ENCODE measurements at regions of chr2 and their contacts with region 1.

Region 1: DNA sequence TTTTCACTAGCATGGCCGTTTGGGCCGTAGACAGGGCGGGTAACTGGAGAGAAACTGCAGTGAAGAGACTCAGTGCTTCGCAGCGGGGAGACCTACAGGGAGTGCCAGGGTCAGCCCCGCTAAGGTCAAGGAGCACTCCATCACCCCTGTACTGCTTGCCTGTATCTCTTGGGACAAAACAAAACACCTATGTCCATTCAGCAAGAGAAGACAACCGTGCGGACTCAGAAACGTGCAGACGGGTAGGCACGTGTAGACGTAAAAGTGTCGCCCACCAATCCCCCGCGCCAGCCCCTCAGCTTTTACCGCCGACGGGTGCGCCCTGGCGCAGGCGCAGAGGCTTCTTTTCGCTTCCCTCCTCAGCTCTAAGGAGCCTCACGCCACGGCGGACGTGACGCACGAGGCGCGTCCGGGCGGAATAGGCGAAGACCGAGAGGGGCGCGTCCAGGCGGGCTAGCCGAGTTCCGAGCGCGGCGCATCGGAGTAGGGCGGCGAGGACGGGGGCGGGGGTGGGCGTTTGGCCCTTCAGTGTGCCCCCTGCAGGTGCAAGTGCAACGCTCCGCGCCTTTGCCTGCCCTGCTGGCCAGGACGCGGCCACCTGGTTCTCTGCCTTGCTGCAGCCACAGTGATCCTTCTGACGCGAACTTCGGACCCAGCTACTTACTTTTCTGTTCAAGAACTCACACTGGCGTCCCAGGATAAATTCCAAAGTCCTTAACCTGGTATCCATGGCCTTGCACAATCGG is 3.3 kb upstream of the SOS1 start:
- DNase-seq: peak; percentile 94
- H3K4me3 Mint-ChIP-seq: peak overlapping the region; percentile 99
- H3K27ac Mint-ChIP-seq: peak overlapping the region; percentile 100
- H3K4me1 Mint-ChIP-seq: peaks cover 67% of the 10 kb centered on the region
- H3K27me3 Mint-ChIP-seq: no peaks in the 10 kb centered on the region

Region 2: GRCh38 chr2:38377050-38377828 is 746.9 kb before region 1 on chr2 and contains the start of gene ATL2:
- intact Hi-C with region 1: loop called (anchors 2 kb)
- DNase-seq: peak; percentile 92
- H3K4me3 Mint-ChIP-seq: peak within 1 kb of the TSS; percentile 95
- H3K27ac Mint-ChIP-seq: peak within 1 kb of the TSS; percentile 96
- H3K4me1 Mint-ChIP-seq: peaks cover 55% of the 10 kb centered on the region
- H3K27me3 Mint-ChIP-seq: peaks cover 14% of the 10 kb centered on the region
- total RNA-seq, gene ATL2: 62.1 and 72.5 TPM in 2 replicates

Region 3: DNA sequence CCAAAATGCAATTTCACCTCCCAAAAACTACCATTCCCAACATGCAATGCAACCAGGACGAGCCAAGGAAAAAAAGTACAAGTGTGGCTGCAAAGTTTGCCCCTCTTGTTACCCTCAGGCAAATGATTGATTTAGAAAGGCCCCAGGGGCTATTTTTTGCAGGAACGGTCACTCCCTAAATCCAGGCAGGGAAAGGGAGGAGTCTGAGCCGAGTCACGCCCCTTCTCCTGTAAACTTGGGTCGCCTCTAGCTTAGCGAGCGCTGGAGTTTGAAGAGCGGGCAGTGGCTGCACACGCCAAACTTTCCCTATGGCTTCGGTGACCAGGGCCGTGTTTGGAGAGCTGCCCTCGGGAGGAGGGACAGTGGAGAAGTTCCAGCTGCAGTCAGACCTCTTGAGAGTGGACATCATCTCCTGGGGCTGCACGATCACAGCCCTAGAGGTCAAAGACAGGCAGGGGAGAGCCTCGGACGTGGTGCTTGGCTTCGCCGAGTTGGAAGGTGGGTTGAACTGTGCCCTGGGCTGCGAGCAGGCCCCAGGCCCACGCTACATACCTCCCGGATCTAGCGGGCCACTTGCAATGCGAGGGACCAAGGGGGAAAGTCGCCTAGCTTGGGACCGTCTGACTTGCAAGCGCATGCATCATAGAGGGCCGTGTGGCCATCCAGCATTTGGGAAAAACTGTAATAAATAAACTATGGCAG is 458.2 kb before region 1 on chr2 and contains the start of gene GALM:
- intact Hi-C with region 1: loop called (anchors 5 kb)
- DNase-seq: peak; percentile 54
- H3K4me3 Mint-ChIP-seq: peak within 1 kb of the TSS; percentile 93
- H3K27ac Mint-ChIP-seq: peak within 1 kb of the TSS; percentile 94
- H3K4me1 Mint-ChIP-seq: peaks cover 69% of the 10 kb centered on the region
- H3K27me3 Mint-ChIP-seq: no peaks in the 10 kb centered on the region
- total RNA-seq, gene GALM: 77.0 and 78.4 TPM in 2 replicates

Region 4: DNA sequence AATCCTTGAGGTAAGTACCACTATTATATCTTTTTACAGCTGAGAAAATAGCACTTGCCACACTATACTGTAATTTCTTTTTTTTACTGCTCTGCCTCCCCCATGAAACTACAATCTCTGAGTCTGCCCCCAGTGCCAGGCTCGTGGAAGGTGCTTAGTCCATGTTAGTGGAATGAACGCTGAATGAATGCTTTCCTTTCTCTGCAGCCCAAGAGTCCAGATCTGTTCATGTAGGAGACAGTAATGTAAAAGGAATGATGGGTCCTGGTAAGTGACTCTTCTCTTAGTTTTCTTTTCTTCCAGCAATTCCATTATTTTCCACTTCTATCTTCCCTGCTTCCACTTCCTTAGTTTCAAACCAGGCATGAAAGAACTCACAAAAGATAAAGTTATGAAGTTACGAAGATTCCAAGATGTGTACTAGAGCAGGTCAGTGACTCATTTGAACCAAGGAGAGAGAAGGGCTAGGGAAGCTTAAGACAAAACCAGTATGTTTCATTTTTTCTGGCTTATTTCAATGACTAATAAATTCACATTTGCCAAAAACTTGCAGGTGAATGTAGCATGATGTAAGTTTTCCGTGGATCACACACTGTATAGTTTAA is 188.5 kb before region 1 on chr2:
- intact Hi-C with region 1: no loop called
- DNase-seq: no peak
- H3K4me3 Mint-ChIP-seq: no peak overlapping the region
- H3K27ac Mint-ChIP-seq: no peak overlapping the region
- H3K4me1 Mint-ChIP-seq: no peaks in the 10 kb centered on the region
- H3K27me3 Mint-ChIP-seq: peaks cover 8% of the 10 kb centered on the region

Region 5: GRCh38 chr2:39059366-39059952 is 64.7 kb before region 1 on chr2:
- intact Hi-C with region 1: loop called (anchors 1 kb)
- DNase-seq: no peak
- H3K4me3 Mint-ChIP-seq: no peak overlapping the region
- H3K27ac Mint-ChIP-seq: no peak overlapping the region
- H3K4me1 Mint-ChIP-seq: peaks cover 24% of the 10 kb centered on the region
- H3K27me3 Mint-ChIP-seq: no peaks in the 10 kb centered on the region

Region 6: GRCh38 chr2:39135690-39136259 is 11.6 kb after region 1 on chr2:
- intact Hi-C with region 1: loop called (anchors 1 kb)
- DNase-seq: no peak
- H3K4me3 Mint-ChIP-seq: peak overlapping the region; percentile 33
- H3K27ac Mint-ChIP-seq: peak overlapping the region; percentile 73
- H3K4me1 Mint-ChIP-seq: peaks cover 74% of the 10 kb centered on the region
- H3K27me3 Mint-ChIP-seq: peaks cover 3% of the 10 kb centered on the region

Region 7: GRCh38 chr2:39379643-39380524 is 255.7 kb after region 1 on chr2:
- intact Hi-C with region 1: loop called (anchors 1 kb)
- DNase-seq: no peak
- H3K4me3 Mint-ChIP-seq: no peak overlapping the region
- H3K27ac Mint-ChIP-seq: peak overlapping the region; percentile 67
- H3K4me1 Mint-ChIP-seq: peaks cover 39% of the 10 kb centered on the region
- H3K27me3 Mint-ChIP-seq: no peaks in the 10 kb centered on the region

Region 8: GRCh38 chr2:39948016-39948719 is 824.0 kb after region 1 on chr2:
- intact Hi-C with region 1: loop called (anchors 5 kb)
- DNase-seq: no peak
- H3K4me3 Mint-ChIP-seq: no peak overlapping the region
- H3K27ac Mint-ChIP-seq: peak overlapping the region; percentile 81
- H3K4me1 Mint-ChIP-seq: peaks cover 29% of the 10 kb centered on the region
- H3K27me3 Mint-ChIP-seq: no peaks in the 10 kb centered on the region